HEK293 (cell line): ENCODE measurements at regions of chr10 and their contacts with region 1.

Region 1: GRCh38 chr10:13087986-13088618 is 11.9 kb upstream of the OPTN start:
- H3K4me3 ChIP-seq: no peak overlapping the region
- H3K27ac ChIP-seq: no peak overlapping the region
- H3K4me1 ChIP-seq: no peaks in the 10 kb centered on the region
- CTCF ChIP-seq: no peak

Region 2: DNA sequence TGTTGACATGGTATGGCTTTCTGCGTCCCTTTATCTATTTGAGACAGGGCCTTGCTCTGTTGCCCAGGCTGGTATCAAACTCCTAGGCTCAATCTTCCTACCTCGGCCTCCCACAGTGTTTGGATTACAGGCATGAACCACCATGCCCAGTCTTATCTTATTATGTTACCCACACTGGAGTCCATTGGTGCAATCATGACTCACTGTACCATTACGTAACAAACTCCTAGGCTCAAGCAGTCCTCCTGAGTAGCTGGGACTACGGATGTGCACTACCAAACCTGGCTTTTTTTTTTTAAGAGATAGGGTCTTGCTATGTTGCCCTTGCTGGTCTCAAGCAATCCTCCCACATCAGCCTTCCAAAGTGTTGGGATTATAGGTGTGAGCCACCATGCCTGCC is 153.3 kb before region 1 on chr10:
- CTCF ChIA-PET with region 1: no interaction called
- POLR2A ChIA-PET with region 1: no interaction called
- H3K4me3 ChIP-seq: no peak overlapping the region
- H3K27ac ChIP-seq: no peak overlapping the region
- H3K4me1 ChIP-seq: no peaks in the 10 kb centered on the region
- CTCF ChIP-seq: no peak

Region 3: GRCh38 chr10:13099666-13100348 is 11.7 kb after region 1 on chr10 and contains the start of gene OPTN:
- CTCF ChIA-PET with region 1: interaction called, 11 read pairs
- POLR2A ChIA-PET with region 1: no interaction called
- H3K4me3 ChIP-seq: peak within 1 kb of the TSS; percentile 88
- H3K27ac ChIP-seq: peak within 1 kb of the TSS; percentile 60; the same call in 1 of the 2 replicates
- H3K4me1 ChIP-seq: peaks cover 4% of the 10 kb centered on the region; the same call in 1 of the 2 replicates
- CTCF ChIP-seq: peak; percentile 68